ENCODE measurements at regions of chr1 and their contacts with region 1.

Region 1: GRCh38 chr1:64663668-64664067 is 81.2 kb upstream of the RAVER2 start:
- DNase-seq: peak in 4 of 35 experiments; percentile 2 to 11 (median 6)
- ATAC-seq: no peak
- H3K4me3 ChIP-seq: no peak overlapping the region
- H3K4me3 Mint-ChIP-seq: no peak overlapping the region
- H3K27ac ChIP-seq: no peak overlapping the region
- H3K27ac Mint-ChIP-seq: no peak overlapping the region
- H3K4me1 ChIP-seq: no peaks in the 10 kb centered on the region
- H3K4me1 Mint-ChIP-seq: no peaks in the 10 kb centered on the region
- H3K27me3 ChIP-seq: no peaks in the 10 kb centered on the region
- H3K27me3 Mint-ChIP-seq: peaks cover 0 to 3% of the 10 kb centered on the region in 2 donors

Region 2: DNA sequence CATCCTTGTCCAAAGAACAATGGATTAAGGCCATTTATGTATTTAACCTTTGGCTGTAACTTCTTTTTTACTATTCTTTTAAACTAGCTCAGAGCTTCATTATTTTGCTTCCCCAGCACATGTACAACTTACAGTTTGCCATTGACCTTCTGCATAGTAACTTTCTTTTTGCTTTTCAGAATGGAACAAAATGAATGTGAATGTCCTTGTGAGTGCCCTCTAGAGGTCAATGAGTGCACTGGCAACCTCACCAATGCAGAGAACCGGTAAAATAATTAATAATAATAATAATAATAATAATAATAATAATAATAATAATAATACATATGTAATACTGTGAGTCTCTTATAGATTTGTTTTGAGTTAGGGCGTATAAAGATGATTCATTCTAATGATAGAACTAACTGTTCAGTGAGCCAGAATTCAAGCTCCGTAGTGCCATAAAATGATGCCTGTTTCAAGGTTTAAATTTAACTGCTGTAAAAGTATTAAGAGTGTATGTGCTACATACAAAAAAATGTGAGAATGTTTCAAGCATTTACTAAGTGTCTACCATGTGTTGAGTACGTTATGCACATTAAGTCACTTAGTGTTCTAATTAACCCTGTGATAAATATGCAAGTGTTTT is 12.2 kb after region 1 on chr1:
- CTCF ChIA-PET with region 1: interaction called, 11 to 12 read pairs
- POLR2A ChIA-PET with region 1: no interaction called
- DNase-seq: peak in 2 of 35 experiments; percentile 7 to 35
- ATAC-seq: no peak
- H3K4me3 ChIP-seq: no peak overlapping the region
- H3K4me3 Mint-ChIP-seq: no peak overlapping the region
- H3K27ac ChIP-seq: no peak overlapping the region
- H3K27ac Mint-ChIP-seq: no peak overlapping the region
- H3K4me1 ChIP-seq: no peaks in the 10 kb centered on the region
- H3K4me1 Mint-ChIP-seq: no peaks in the 10 kb centered on the region
- H3K27me3 ChIP-seq: peaks cover 0 to 3% of the 10 kb centered on the region in 2 experiments
- H3K27me3 Mint-ChIP-seq: peaks cover 0 to 2% of the 10 kb centered on the region in 2 donors

Region 3: DNA sequence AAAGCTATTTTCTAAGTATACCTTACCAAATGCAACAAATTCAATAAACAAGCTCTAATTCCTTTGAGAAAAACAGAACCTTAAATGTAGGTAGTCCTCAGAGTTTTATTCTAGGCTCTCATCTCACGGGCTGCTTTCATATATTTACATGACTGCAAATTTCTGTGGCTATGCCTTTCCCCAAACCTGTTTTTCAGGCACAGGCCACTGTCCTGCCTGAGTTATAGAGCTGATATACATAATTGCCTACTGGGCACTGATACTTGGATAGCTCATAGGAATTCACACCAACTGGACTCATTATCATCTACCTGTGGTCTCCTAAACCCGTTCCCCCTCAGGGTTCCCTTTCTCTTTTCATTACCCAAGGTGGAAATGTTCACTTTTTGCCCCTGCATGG is 60.1 kb after region 1 on chr1:
- CTCF ChIA-PET with region 1: no interaction called
- POLR2A ChIA-PET with region 1: no interaction called
- DNase-seq: no peak
- ATAC-seq: no peak
- H3K4me3 ChIP-seq: no peak overlapping the region
- H3K4me3 Mint-ChIP-seq: no peak overlapping the region
- H3K27ac ChIP-seq: no peak overlapping the region
- H3K27ac Mint-ChIP-seq: no peak overlapping the region
- H3K4me1 ChIP-seq: no peaks in the 10 kb centered on the region
- H3K4me1 Mint-ChIP-seq: no peaks in the 10 kb centered on the region
- H3K27me3 ChIP-seq: peaks cover 0 to 2% of the 10 kb centered on the region in 2 experiments
- H3K27me3 Mint-ChIP-seq: peaks cover 31 to 42% of the 10 kb centered on the region in 2 donors

Measured in T-cell (primary cell).